Sigmoid colon (tissue), 7 donors: ENCODE measurements at regions of chr17 and their contacts with region 1.

Region 1: GRCh38 chr17:31558748-31559644 is 167.5 kb downstream of the RAB11FIP4 start:
- DNase-seq: peak; percentile 92
- H3K4me3 ChIP-seq: peak overlapping the region; percentile 67 to 85 (median 69)
- H3K27ac ChIP-seq: peak overlapping the region; percentile 88 to 96 (median 91)
- H3K4me1 ChIP-seq: peaks cover 0 to 38% (median 33%) of the 10 kb centered on the region in 4 donors
- H3K27me3 ChIP-seq: no peaks in the 10 kb centered on the region
- CTCF ChIP-seq: peak; percentile 10 to 94 (median 22)
- EP300 ChIP-seq: no peak
- POLR2A ChIP-seq: no peak

Region 2: GRCh38 chr17:31596382-31597323 is 37.7 kb after region 1 on chr17:
- intact Hi-C with region 1: loop called (anchors 5 kb)
- DNase-seq: peak; percentile 91
- H3K4me3 ChIP-seq: no peak overlapping the region
- H3K27ac ChIP-seq: peak overlapping the region; percentile 75 to 82 (median 80)
- H3K4me1 ChIP-seq: peaks cover 0 to 41% (median 27%) of the 10 kb centered on the region in 4 donors
- H3K27me3 ChIP-seq: no peaks in the 10 kb centered on the region
- CTCF ChIP-seq: no peak
- EP300 ChIP-seq: peak in 1 of 4 donors; percentile 67
- POLR2A ChIP-seq: no peak

Region 3: GRCh38 chr17:31696184-31696602 is 137.2 kb after region 1 on chr17:
- intact Hi-C with region 1: loop called (anchors 2 kb)
- DNase-seq: peak; percentile 96
- H3K4me3 ChIP-seq: no peak overlapping the region
- H3K27ac ChIP-seq: peak overlapping the region; percentile 81 to 86 (median 83)
- H3K4me1 ChIP-seq: peaks cover 0 to 84% (median 73%) of the 10 kb centered on the region in 4 donors
- H3K27me3 ChIP-seq: no peaks in the 10 kb centered on the region
- CTCF ChIP-seq: peak in 1 of 4 experiments; percentile 30
- EP300 ChIP-seq: peak in 3 of 4 donors; percentile 78 to 89 (median 80)
- POLR2A ChIP-seq: no peak

Region 4: DNA sequence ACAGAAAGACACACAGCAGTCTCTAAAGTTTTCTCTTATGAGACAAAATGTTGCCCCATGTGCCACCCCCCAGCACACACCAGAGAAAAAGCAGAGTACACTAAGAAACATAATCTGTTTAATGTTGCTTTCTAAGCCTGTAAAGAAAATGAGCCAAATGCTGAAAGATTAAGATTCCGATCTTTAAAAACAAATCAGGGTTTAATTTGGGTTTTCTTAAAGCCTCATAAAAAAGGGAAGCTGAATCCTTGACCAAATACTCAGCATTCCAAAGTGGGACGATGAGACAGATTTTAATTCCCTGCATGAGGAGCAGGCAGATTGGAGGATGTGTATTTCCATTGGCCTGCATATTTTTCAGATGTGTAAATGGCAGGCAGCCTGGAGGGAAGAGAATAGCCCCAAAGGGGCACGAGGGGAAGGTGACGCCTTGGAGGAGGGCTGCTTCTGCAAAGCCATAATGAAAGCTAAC is 181.7 kb after region 1 on chr17:
- intact Hi-C with region 1: loop called (anchors 5 kb)
- DNase-seq: no peak
- H3K4me3 ChIP-seq: no peak overlapping the region
- H3K27ac ChIP-seq: peak overlapping the region; percentile 71 to 82 (median 76)
- H3K4me1 ChIP-seq: peaks cover 0 to 85% (median 71%) of the 10 kb centered on the region in 4 donors
- H3K27me3 ChIP-seq: no peaks in the 10 kb centered on the region
- CTCF ChIP-seq: no peak
- EP300 ChIP-seq: no peak
- POLR2A ChIP-seq: no peak

Region 5: GRCh38 chr17:31787857-31788570 is 229.0 kb after region 1 on chr17:
- intact Hi-C with region 1: loop called (anchors 5 kb)
- DNase-seq: peak; percentile 93
- H3K4me3 ChIP-seq: no peak overlapping the region
- H3K27ac ChIP-seq: peak overlapping the region; percentile 79 to 84 (median 83)
- H3K4me1 ChIP-seq: peaks cover 0 to 13% (median 12%) of the 10 kb centered on the region in 4 donors
- H3K27me3 ChIP-seq: no peaks in the 10 kb centered on the region
- CTCF ChIP-seq: no peak
- EP300 ChIP-seq: peak in 1 of 4 donors; percentile 15
- POLR2A ChIP-seq: no peak

Region 6: DNA sequence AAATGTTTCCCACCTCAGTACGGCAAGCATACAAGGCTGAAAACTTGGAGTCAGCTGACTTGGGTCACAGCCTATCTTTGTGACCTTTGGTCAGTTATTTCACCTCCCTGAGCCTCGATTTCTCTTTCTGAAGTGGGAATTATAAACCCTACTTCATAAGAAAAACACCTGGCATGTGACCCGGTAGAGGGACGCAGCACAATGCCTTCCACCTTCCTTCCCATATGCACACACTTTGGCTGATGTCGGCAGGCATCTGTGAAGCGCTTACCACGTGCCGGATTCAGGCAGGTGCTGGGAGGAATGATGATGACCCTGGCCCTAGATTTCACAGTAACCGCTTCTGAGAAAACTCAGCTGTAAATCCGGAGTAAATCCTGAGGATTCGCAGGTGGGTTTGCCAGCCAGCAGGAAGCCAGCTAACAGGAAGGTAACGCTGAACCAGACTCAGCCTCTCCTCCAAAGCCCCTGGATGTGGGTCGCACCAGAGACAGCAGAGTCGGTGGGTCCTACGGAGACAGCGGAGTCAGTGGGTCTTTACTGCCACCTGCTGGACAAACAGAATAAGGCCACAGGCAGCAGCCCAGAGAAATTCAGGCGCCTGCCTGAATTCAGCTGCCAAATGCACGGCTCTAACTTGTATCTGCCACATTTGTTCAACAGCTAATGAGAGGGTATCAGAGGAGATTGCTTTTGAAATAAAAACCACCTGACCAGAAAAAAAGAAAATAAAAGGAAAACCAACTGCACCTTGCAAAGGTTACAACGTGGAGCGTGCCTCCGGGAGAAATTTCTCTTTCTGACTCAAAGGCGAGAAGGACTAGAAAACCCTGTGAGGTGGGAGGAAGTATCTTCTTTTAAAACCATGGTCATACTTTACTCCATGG is 283.4 kb after region 1 on chr17:
- intact Hi-C with region 1: loop called (anchors 1 kb)
- DNase-seq: peak; percentile 86
- H3K4me3 ChIP-seq: peak overlapping the region in 3 of 4 donors; percentile 7 to 27 (median 19)
- H3K27ac ChIP-seq: peak overlapping the region; percentile 68 to 83 (median 72)
- H3K4me1 ChIP-seq: peaks cover 0 to 50% (median 41%) of the 10 kb centered on the region in 4 donors
- H3K27me3 ChIP-seq: no peaks in the 10 kb centered on the region
- CTCF ChIP-seq: peak; percentile 95 to 99 (median 98)
- EP300 ChIP-seq: no peak
- POLR2A ChIP-seq: no peak

Region 7: GRCh38 chr17:31900877-31901276 is 341.9 kb after region 1 on chr17:
- intact Hi-C with region 1: loop called (anchors 5 kb)
- DNase-seq: no peak
- H3K4me3 ChIP-seq: peak overlapping the region; percentile 67 to 76 (median 70)
- H3K27ac ChIP-seq: peak overlapping the region; percentile 65 to 80 (median 79)
- H3K4me1 ChIP-seq: peaks cover 0 to 21% (median 12%) of the 10 kb centered on the region in 4 donors
- H3K27me3 ChIP-seq: no peaks in the 10 kb centered on the region
- CTCF ChIP-seq: no peak
- EP300 ChIP-seq: no peak
- POLR2A ChIP-seq: no peak